Right ventricle myocardium inferior (tissue), 1 donor: ENCODE measurements at regions of chr6 and their contacts with region 1.

Region 1: DNA sequence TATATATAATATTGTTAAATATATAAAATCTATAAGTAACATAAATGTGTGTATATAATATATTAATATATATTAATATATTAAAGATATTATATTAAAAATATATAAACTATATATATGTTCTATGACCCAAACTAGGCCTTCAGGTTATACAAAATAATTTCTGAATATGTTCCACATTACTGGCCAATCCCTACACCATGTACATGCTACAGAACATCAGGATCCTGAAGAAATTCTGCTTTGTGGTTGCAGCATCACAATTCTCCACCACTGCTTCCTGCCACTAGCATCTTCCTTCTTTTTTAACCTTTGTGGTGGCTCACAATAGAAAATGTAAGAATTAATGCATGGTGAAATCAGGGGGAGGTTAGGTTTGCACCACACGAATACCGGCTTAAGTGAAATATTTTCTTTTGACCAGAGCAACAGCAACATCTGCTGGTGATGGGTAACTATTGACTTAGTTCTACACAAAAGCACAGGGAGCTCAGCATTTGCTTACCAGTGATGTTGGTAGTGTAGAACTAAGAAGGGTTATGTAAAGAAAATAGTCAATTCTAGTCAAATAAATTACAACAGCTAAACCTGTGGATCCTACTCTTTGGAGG is 280.6 kb downstream of the SYNE1 start:
- DNase-seq: no peak
- ATAC-seq: no peak

Region 2: GRCh38 chr6:151765444-151765886 is 591.1 kb before region 1 on chr6:
- intact Hi-C with region 1: loop called (anchors 10 kb)
- DNase-seq: no peak
- ATAC-seq: peak; percentile 38

Region 3: GRCh38 chr6:152458648-152459644 is 102.4 kb after region 1 on chr6:
- intact Hi-C with region 1: no loop called
- DNase-seq: no peak
- ATAC-seq: no peak

Region 4: DNA sequence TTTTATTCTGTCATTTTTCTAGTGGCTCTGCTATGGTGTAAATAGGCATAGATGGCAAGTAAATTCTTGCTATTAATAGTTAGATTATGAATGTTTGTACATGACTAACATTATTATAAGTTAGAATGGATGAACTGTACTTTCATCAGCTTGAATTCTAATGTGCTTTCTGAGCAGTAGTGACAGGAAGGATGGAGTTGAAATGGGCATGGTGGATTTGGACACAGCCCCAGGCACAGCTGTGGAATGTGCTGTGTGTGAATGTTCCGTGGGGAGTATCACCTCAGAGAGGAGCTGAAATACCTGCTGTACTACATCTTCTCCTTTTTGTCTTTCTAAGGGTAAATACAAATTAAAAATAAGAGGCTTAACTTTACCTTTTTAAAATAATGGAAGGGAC is 559.5 kb after region 1 on chr6:
- intact Hi-C with region 1: no loop called
- DNase-seq: no peak
- ATAC-seq: no peak